AG04449 (cell line): ENCODE measurements at regions of chr1 and their contacts with region 1.

Region 1: GRCh38 chr1:113042285-113043143 is 30.5 kb upstream of the LRIG2 start:
- DNase-seq: peak; percentile 69
- H3K4me3 ChIP-seq: no peak overlapping the region; the same call in 1 of the 2 replicates
- CTCF ChIP-seq: peak; percentile 57

Region 2: DNA sequence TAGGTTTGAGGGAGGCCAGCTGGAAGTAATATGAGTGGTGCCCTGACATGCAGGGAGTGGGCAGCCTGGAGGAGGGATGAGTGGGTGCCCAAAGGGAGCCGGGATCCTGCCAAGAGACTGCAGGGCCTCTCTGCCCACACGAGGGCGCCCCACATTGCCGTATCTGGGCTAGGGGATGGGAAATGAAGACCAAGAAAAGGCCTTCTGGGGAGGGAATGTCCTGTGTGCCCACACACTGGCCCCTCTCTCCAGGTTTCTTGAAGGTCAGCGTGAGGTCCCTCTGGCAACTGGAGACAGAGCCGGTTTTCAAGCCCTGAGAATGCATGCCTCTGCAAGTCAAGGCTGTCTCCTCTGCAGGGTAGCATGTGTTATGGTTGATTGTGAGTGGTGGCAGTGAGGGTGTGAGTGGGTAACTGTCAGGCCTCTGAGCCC is 233.2 kb before region 1 on chr1:
- CTCF ChIA-PET with region 1: interaction called, 77 read pairs
- POLR2A ChIA-PET with region 1: no interaction called
- DNase-seq: no peak
- H3K4me3 ChIP-seq: no peak overlapping the region
- CTCF ChIP-seq: peak; percentile 97

Region 3: GRCh38 chr1:112882271-112882744 is 160.2 kb before region 1 on chr1:
- CTCF ChIA-PET with region 1: interaction called, 111 read pairs
- POLR2A ChIA-PET with region 1: interaction called, 3 read pairs
- DNase-seq: no peak
- H3K4me3 ChIP-seq: no peak overlapping the region
- CTCF ChIP-seq: no peak

Region 4: GRCh38 chr1:112955781-112956543 is 86.6 kb before region 1 on chr1 and contains the start of gene SLC16A1:
- CTCF ChIA-PET with region 1: interaction called, 4 read pairs
- POLR2A ChIA-PET with region 1: interaction called, 11 read pairs
- DNase-seq: peak; percentile 63
- H3K4me3 ChIP-seq: peak within 1 kb of the TSS; percentile 95
- CTCF ChIP-seq: peak; percentile 51

Region 5: GRCh38 chr1:113057006-113057405 is 14.5 kb after region 1 on chr1:
- CTCF ChIA-PET with region 1: interaction called, 19 read pairs
- POLR2A ChIA-PET with region 1: no interaction called
- DNase-seq: no peak
- H3K4me3 ChIP-seq: no peak overlapping the region
- CTCF ChIP-seq: no peak

Region 6: DNA sequence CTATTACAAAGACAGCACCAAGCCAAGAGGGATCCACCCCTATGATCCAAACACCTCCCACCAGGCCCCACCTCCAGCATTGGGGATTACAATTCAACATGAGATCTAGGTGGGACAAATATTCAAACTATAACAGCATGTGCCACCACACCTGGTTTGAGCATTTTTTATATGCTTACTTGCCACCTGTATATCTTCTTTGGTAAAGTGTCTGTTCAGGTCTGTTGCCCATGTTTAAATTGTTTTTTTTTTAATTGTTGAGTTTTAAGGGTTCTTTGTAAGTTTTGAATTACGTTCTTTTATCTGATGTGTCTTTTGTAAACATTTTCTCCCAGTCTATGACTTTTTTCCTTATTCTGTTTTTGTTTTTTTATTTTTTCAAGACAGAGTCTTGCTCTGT is 113.9 kb after region 1 on chr1:
- CTCF ChIA-PET with region 1: no interaction called
- POLR2A ChIA-PET with region 1: no interaction called
- DNase-seq: no peak
- H3K4me3 ChIP-seq: no peak overlapping the region
- CTCF ChIP-seq: no peak